Heart left ventricle (tissue), 16 donors: ENCODE measurements at regions of chr19 and their contacts with region 1.

Region 1: GRCh38 chr19:9796113-9796773 is 22.6 kb downstream of the FBXL12 start:
- DNase-seq: peak; percentile 76 to 82 (median 80)
- ATAC-seq: peak; percentile 26 to 56 (median 37)
- H3K4me3 ChIP-seq: no peak overlapping the region
- H3K27ac ChIP-seq: peak overlapping the region in 2 of 12 donors; percentile 4 to 31
- H3K4me1 ChIP-seq: peaks cover 0 to 11% (median 3%) of the 10 kb centered on the region in 12 donors
- H3K27me3 ChIP-seq: no peaks in the 10 kb centered on the region
- CTCF ChIP-seq: peak; percentile 66 to 92 (median 81)
- POLR2A ChIP-seq: no peak

Region 2: DNA sequence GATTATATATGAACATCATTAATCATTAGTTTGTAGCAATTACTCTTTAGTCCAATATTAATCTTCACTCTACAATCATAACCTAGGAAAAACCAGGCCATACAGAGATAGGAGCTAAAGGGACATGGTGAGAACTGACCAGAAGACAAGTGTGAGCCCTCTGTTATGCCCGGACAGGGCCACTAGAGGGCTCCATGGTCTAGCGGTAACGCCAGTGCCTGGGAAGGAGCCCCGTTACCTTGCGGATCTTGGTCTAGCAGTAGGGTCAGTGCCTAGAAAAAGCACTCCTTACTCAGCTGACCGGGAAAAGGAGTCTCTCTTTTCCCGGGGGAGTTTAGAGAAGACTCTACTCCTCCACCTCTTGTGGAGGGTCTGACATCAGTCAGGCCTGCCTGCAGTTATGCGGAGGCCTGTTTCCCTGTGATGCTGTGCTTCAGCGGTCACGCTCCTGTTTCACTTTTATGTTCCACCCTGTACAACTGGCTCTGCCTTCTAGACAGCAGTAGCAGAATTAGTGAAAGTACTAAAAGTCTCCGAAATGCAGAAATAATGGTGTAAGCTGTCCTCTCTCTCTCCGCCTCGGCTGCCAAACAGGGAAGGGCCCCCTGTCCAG is 590.6 kb before region 1 on chr19:
- intact Hi-C with region 1: loop called in 9 of 10 experiments (anchors 2 to 10 kb)
- DNase-seq: peak; percentile 58 to 82 (median 63)
- ATAC-seq: peak; percentile 69 to 77 (median 75)
- H3K4me3 ChIP-seq: peak overlapping the region in 10 of 12 donors; percentile 20 to 44 (median 40)
- H3K27ac ChIP-seq: no peak overlapping the region
- H3K4me1 ChIP-seq: peaks cover 0 to 5% (median 0%) of the 10 kb centered on the region in 12 donors
- H3K27me3 ChIP-seq: peaks cover 0 to 20% (median 0%) of the 10 kb centered on the region in 9 donors
- CTCF ChIP-seq: peak; percentile 82 to 99 (median 88)
- POLR2A ChIP-seq: no peak

Region 3: DNA sequence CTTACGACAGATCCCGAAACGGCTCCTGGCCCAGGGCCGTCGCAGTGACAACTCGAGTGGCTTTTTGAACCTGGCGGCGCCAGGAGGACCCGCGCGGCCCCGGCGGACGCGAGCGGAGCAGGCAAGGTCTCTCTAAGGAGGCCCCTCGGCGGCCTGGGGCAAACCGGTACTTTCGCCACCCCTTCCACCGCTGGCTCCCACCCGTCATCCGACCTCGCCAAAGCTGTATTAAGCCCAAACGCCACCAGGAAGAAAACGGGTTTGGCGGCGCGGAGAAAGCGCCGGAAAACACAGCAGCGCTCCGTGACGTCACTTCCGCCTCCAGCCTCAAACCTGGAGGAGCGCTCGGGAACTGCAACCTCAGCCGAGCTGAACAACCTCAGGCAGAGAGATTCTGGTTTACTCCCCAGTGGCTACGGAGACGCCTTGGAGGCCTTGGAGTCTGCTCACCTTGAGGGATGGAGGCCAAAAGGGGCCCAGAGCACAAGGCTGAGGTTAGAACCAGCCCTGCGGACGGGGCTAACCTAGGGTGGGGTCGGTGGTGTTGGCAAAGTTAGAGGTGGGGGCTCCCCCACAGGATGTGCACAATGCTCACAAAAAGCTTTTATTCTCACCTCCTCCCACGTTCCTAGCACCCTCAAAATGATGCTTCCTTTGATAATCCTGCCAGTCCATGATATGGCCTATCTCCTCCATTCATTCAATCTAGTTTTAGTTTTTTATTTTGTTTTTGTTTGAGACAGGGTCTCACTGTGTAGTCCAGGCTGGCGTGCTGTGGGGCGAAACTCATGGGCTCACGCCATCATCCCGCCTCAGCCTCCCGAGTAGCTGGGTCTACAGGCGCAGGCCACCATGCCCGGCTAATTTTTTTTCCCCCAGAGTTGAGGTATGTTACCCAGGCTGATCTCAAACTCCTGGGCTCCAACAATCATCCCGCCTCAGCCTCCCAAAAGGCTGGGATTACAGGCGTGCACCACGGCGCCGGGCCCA is 360.7 kb before region 1 on chr19 and contains the start of gene ZNF266:
- intact Hi-C with region 1: loop called in 2 of 10 experiments (anchors 10 kb)
- DNase-seq: peak; percentile 89 to 94 (median 91)
- ATAC-seq: peak; percentile 91 to 97 (median 96)
- H3K4me3 ChIP-seq: peak within 1 kb of the TSS; percentile 30 to 95 (median 80)
- H3K27ac ChIP-seq: peak within 1 kb of the TSS; percentile 68 to 95 (median 92)
- H3K4me1 ChIP-seq: peaks cover 0 to 27% (median 16%) of the 10 kb centered on the region in 12 donors
- H3K27me3 ChIP-seq: no peaks in the 10 kb centered on the region
- CTCF ChIP-seq: peak; percentile 40 to 80 (median 70)
- POLR2A ChIP-seq: peak in 1 of 2 donors; percentile 46
- total RNA-seq, gene ZNF266: 5.7 to 11.1 (median 7.7) TPM

Region 4: GRCh38 chr19:9621156-9622037 is 174.8 kb before region 1 on chr19 and contains the start of gene ZNF561:
- intact Hi-C with region 1: loop called (anchors 1 to 5 kb)
- DNase-seq: peak; percentile 85 to 93 (median 90)
- ATAC-seq: peak; percentile 93 to 96 (median 95)
- H3K4me3 ChIP-seq: peak within 1 kb of the TSS; percentile 60 to 97 (median 76)
- H3K27ac ChIP-seq: peak within 1 kb of the TSS; percentile 79 to 97 (median 93)
- H3K4me1 ChIP-seq: peaks cover 4 to 30% (median 18%) of the 10 kb centered on the region in 12 donors
- H3K27me3 ChIP-seq: no peaks in the 10 kb centered on the region
- CTCF ChIP-seq: no peak
- POLR2A ChIP-seq: no peak
- total RNA-seq, gene ZNF561: 12.2 to 30.0 (median 20.8) TPM

Region 5: DNA sequence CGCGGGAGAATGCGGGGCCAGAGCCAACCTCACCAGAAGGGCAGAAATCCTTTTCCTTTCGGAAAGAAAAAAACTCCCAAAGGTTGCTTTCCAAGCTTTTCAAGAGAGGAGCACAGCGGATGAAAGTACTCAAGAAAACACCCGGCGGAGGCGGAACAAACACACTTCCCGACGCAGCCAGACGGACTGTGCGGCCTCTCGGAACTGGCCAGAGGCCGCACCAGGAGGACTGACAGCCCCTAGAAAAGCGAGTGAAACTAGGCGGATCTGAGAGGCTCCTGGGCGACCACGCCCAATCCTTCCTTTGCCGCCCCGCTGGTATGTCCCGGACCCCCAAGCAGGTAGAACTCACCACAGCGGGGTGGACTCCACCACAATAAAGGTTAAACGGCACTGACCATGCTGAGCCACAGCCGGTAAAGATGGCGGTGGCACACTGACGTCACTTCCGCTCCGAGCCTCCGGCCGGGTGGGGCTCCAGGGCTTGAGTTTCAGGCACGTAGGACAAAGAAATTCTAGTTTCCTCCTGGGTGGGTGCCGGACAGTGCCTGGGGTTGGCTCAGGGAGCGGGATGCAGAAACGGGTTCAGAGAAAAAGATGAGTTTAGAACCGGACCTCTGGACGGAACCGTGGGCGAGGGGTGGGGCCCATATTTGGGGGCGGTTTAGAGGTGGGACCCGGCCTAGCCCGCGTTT is 121.4 kb before region 1 on chr19 and contains the start of gene ZNF562:
- intact Hi-C with region 1: loop called in 1 of 10 experiments (anchors 5 kb)
- DNase-seq: peak; percentile 90 to 94 (median 92)
- ATAC-seq: peak; percentile 93 to 99 (median 98)
- H3K4me3 ChIP-seq: peak within 1 kb of the TSS; percentile 64 to 96 (median 84)
- H3K27ac ChIP-seq: peak within 1 kb of the TSS; percentile 84 to 99 (median 93)
- H3K4me1 ChIP-seq: peaks cover 0 to 12% (median 4%) of the 10 kb centered on the region in 12 donors
- H3K27me3 ChIP-seq: no peaks in the 10 kb centered on the region
- CTCF ChIP-seq: no peak
- POLR2A ChIP-seq: peak in 1 of 2 donors; percentile 48
- total RNA-seq, gene ZNF562: 13.5 to 24.1 (median 20.7) TPM

Region 6: GRCh38 chr19:9727644-9728043 is 68.6 kb before region 1 on chr19:
- intact Hi-C with region 1: no loop called
- DNase-seq: no peak
- ATAC-seq: no peak
- H3K4me3 ChIP-seq: no peak overlapping the region
- H3K27ac ChIP-seq: no peak overlapping the region
- H3K4me1 ChIP-seq: no peaks in the 10 kb centered on the region
- H3K27me3 ChIP-seq: no peaks in the 10 kb centered on the region
- CTCF ChIP-seq: no peak
- POLR2A ChIP-seq: no peak